Activated CD8-positive, alpha-beta T cell treated with anti-CD3 and anti-CD28 coated beads, Interleukin-2, amount 10 ng/mL, durations not matched to agents 7 days and 5 days (primary cell): ENCODE measurements at regions of chr17 and their contacts with region 1.

Region 1: DNA sequence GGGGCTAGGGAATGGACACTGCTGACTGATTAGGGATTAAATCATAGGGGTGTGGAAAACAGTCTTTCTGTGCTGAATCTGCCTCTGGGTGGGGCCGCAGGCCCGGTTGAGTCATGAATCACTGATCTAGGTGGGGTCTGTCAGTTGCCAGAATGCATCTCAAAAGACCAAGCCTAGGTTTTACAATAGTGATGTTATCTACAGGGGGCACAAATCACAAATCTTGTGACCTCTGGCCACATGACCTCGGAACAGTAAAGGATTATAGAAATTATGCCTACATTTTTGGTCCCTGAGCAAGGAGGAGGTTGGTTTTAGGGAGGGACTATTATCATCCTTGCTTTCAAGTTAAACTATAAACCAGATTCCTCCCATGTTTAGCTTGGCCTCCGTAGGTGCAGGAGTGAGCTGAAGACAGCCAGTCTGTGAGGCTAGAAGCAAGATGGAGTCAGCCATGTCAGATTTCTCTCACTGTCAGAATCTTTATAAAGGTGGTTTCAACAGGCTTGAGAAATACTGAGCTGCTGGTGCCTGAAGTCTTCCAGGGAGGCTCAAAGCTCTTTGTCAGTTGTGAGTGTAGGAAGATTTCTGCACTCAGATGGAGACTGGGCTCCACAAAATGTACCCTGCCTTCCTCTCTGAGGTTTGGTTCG is 12.9 kb downstream of the GNGT2 start:
- DNase-seq: no peak
- ATAC-seq: no peak
- H3K4me3 Mint-ChIP-seq: no peak overlapping the region
- H3K27ac Mint-ChIP-seq: no peak overlapping the region
- H3K4me1 Mint-ChIP-seq: peaks cover 43% of the 10 kb centered on the region
- H3K27me3 Mint-ChIP-seq: no peaks in the 10 kb centered on the region

Region 2: DNA sequence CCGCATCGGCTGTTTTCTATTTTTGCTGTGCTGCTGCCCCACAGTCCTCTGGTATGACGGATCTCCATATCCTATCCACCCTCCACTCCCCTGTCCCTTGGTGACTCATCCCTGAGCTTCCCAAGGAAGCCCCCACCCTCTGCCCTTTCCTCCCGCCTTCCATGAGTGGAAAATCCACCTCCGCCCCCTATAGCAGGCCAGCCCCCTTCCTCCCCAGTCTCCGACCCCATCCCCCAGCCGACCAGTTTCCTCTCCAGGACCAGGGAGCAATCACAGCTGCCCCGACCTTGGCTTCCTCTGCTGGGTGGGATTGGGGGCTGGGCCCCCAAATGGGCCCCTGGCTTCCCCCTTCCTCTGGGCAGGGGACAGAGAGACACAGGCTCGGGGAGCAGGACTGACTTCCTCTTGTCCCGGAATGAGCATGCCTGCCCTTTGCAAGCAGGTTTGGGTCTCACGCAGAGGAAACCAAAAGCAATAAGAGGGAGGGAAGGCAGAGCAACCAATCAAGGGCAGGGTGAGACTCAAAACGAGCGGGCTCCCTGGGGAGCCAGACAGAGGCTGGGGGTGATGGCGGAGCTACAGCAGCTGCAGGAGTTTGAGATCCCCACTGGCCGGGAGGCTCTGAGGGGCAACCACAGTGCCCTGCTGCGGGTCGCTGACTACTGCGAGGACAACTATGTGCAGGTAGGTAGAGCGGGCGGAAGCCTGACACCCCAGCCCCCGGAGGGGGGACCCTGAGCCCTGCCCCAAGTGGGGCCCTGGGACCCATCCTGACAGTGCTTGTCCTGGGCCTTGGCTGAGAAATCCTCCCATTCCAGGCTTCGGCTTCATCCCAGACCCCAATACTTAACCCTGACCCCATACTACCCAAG is 12.9 kb after region 1 on chr17 and contains the starts of genes ABI3 and GNGT2:
- CTCF ChIA-PET with region 1: interaction called, 30 read pairs
- POLR2A ChIA-PET with region 1: interaction called, 69 read pairs
- DNase-seq: peak; percentile 84
- ATAC-seq: peak; percentile 83
- H3K4me3 Mint-ChIP-seq: peak within 1 kb of the TSS; percentile 96
- H3K27ac Mint-ChIP-seq: peak within 1 kb of the TSS; percentile 89
- H3K4me1 Mint-ChIP-seq: peaks cover 62% of the 10 kb centered on the region
- H3K27me3 Mint-ChIP-seq: no peaks in the 10 kb centered on the region
- total RNA-seq, gene ABI3: 110 to 117 TPM
- total RNA-seq, gene GNGT2: 40.0 to 45.4 TPM

Region 3: DNA sequence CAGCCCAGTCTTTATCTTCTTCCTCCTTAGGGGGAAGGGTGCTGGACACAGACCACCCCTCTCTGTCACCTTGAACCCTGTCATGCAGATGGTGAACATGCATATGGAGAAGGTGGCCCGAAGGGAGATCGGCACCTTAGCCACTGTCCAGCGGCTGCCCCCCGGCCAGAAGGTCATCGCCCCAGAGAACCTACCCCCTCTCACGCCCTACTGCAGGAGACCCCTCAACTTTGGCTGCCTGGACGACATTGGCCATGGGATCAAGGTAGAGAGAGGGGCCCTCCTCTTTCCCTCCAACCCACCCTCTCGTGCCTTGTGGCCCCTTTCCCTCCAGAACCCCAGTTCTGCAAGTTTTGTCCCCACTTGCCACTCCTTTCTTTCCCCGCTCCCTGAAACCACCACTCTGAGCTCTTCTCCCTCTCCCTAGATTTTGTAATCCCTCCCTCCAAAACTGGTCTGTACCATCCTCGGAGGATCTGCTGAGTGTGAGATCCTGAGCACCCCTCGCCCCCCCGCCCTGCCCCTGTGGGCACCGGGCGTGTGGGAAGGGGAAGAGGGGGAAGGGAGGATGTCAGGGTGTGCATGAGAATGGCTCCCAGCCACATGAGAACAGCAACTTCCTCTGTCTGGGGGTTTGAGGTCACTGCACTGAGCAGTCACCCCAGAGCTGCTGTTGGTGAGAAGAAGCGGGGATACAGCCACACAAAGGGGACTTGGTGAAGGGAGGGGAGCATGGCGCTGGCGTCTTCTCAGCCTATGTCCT is 20.4 kb after region 1 on chr17:
- CTCF ChIA-PET with region 1: interaction called, 30 read pairs
- POLR2A ChIA-PET with region 1: interaction called, 69 read pairs
- DNase-seq: peak; percentile 90
- ATAC-seq: peak; percentile 77
- H3K4me3 Mint-ChIP-seq: peak overlapping the region; percentile 77
- H3K27ac Mint-ChIP-seq: peak overlapping the region; percentile 98
- H3K4me1 Mint-ChIP-seq: peaks cover 82% of the 10 kb centered on the region
- H3K27me3 Mint-ChIP-seq: no peaks in the 10 kb centered on the region

Region 4: DNA sequence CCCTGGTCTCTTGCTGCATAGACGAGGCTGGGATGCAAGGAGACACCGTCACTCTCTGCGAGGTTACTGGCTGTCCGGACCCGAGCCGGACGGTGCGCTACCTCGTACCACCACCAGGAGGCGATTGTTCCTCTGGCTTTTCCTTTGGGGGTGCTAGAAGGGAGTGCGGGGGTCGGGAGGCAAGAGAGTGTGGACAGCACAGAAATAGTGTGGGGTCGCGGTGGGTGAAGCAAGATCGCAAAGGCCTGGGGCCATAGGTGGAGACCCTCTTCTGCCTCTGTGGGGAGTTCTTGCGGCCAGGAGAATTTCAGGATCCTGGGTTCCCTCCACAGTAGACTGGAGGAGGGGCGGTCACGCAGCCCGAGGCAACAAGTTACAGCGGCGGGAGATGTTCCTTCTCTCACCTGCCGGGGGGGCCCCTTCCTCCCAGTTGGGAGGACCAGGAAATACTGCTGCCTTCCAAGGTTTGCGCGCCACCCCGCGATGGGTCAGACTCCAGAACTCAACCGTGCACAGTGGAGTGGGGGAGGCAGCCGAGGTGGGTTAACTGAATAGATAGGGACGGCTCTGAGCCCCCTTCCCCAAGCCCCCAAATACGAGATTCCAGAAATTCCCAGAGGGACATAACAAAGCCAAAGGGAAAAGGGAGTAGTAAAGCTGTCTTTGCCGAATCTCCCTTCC is 26.2 kb after region 1 on chr17:
- CTCF ChIA-PET with region 1: interaction called, 92 read pairs
- POLR2A ChIA-PET with region 1: interaction called, 39 read pairs
- DNase-seq: peak; percentile 78
- ATAC-seq: no peak
- H3K4me3 Mint-ChIP-seq: peak overlapping the region; percentile 53
- H3K27ac Mint-ChIP-seq: peak overlapping the region; percentile 83
- H3K4me1 Mint-ChIP-seq: peaks cover 73% of the 10 kb centered on the region
- H3K27me3 Mint-ChIP-seq: no peaks in the 10 kb centered on the region

Region 5: GRCh38 chr17:49260011-49260921 is 62.8 kb after region 1 on chr17:
- CTCF ChIA-PET with region 1: no interaction called
- POLR2A ChIA-PET with region 1: no interaction called
- DNase-seq: peak; percentile 53
- ATAC-seq: peak; percentile 88
- H3K4me3 Mint-ChIP-seq: peak overlapping the region; percentile 75
- H3K27ac Mint-ChIP-seq: peak overlapping the region; percentile 66
- H3K4me1 Mint-ChIP-seq: peaks cover 13% of the 10 kb centered on the region
- H3K27me3 Mint-ChIP-seq: peaks cover 14% of the 10 kb centered on the region